ENCODE measurements at regions of chr15 and their contacts with region 1.

Region 1: DNA sequence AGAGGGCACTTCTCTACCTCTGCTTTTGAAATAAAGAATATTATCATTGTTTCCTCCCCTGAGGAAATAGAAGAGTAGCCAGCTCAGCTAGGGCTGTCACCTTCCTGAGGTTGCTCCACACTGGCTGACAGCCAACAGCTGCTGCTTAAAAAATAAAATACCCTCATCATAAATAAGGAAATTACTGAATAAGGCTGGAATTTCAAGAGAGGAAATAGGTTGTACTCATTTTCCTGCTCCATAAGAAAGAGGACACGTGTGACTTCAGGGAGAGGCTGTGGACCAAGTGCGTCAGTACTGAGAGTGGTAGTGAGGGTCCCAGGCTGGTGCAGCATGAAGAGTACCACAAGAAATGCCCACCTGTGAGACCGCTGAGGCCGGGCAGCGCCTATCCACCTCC is 8.1 kb upstream of the C2CD4B start:
- DNase-seq: peak; percentile 29
- ATAC-seq: no peak
- H3K4me3 ChIP-seq: no peak overlapping the region
- H3K27ac ChIP-seq: no peak overlapping the region
- H3K4me1 ChIP-seq: no peaks in the 10 kb centered on the region
- H3K27me3 ChIP-seq: peaks cover 7% of the 10 kb centered on the region; the same call in 1 of the 2 replicates
- CTCF ChIP-seq: no peak

Region 2: GRCh38 chr15:62119227-62119864 is 53.9 kb before region 1 on chr15:
- CTCF ChIA-PET with region 1: no interaction called
- POLR2A ChIA-PET with region 1: interaction called, 11 read pairs
- intact Hi-C with region 1: no loop called
- DNase-seq: peak; percentile 82
- ATAC-seq: peak; percentile 89
- H3K4me3 ChIP-seq: peak overlapping the region; percentile 22; the same call in 1 of the 2 replicates
- H3K27ac ChIP-seq: peak overlapping the region; percentile 69
- H3K4me1 ChIP-seq: peaks cover 27% of the 10 kb centered on the region
- H3K27me3 ChIP-seq: no peaks in the 10 kb centered on the region
- CTCF ChIP-seq: no peak